ENCODE measurements at regions of chr5 and their contacts with region 1.

Region 1: GRCh38 chr5:43389679-43390329 is 22.4 kb downstream of the CCL28 start:
- DNase-seq: peak; percentile 40
- ATAC-seq: peak; percentile 88
- H3K4me3 ChIP-seq: no peak overlapping the region
- H3K27ac ChIP-seq: no peak overlapping the region
- H3K4me1 ChIP-seq: peaks cover 8% of the 10 kb centered on the region
- H3K27me3 ChIP-seq: no peaks in the 10 kb centered on the region
- CTCF ChIP-seq: peak; percentile 71 to 86 (median 84); a peak in 5 of 6 replicates
- EP300 ChIP-seq: no peak
- POLR2A ChIP-seq: no peak
- RAD21 ChIP-seq: peak; percentile 71

Region 2: DNA sequence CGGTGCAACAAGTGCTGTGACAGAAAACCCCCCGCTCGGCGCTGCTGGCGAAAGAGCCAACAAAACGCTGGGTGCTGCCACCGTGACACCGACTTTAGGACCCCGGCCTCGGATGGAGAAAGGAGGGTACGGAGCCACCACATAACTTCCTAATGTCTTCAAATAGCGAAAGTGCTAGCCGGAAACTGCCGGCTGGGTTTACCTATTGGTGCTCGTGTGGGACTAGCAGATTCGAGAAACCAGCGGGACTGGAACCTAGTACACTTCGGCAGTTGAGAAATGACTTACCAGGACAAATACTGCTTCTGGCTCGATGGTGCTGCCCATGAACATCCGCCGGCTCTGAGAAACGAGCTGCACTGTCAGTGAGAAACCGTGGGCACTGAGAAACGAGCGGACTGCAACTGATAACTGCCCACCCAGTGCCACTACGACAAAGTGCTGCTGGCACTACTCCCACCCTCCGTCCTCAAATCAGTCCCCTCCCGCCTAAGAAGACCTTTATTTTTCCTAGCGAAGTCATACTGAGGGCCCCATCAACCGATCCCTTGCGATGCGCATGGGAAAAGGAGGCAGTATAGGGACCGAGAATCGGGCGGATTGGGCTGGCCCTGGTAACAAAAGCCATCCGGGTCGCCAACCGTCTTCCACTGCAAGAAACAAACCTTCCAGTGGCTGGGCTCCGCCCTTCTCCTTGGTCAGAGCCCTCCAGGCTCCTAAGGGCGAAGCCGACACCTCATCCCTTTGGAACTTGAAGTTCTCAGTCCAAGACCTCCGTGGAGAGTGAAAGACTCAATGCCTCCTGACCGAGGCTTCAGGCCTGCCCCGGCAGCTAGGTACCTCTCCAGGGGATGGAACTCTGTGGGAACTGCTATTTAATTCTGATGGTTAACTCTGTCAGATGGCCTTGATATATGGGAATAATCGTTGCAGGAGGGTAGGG is 322.7 kb before region 1 on chr5:
- CTCF ChIA-PET with region 1: interaction called, 13 read pairs
- POLR2A ChIA-PET with region 1: no interaction called
- RAD21 ChIA-PET with region 1: no interaction called
- SMC1A ChIA-PET with region 1: no interaction called
- in situ Hi-C with region 1: loop called (anchors 10 kb)
- intact Hi-C with region 1: loop called (anchors 10 kb)
- DNase-seq: peak; percentile 74
- ATAC-seq: peak; percentile 58
- H3K4me3 ChIP-seq: peak overlapping the region; percentile 91
- H3K27ac ChIP-seq: peak overlapping the region; percentile 100
- H3K4me1 ChIP-seq: peaks cover 10% of the 10 kb centered on the region
- H3K27me3 ChIP-seq: no peaks in the 10 kb centered on the region
- CTCF ChIP-seq: no peak
- EP300 ChIP-seq: peak in 1 of 2 experiments; percentile 100; a peak in 2 of 4 replicates
- POLR2A ChIP-seq: peak; percentile 47; the same call in 1 of the 2 replicates
- RAD21 ChIP-seq: no peak

Region 3: DNA sequence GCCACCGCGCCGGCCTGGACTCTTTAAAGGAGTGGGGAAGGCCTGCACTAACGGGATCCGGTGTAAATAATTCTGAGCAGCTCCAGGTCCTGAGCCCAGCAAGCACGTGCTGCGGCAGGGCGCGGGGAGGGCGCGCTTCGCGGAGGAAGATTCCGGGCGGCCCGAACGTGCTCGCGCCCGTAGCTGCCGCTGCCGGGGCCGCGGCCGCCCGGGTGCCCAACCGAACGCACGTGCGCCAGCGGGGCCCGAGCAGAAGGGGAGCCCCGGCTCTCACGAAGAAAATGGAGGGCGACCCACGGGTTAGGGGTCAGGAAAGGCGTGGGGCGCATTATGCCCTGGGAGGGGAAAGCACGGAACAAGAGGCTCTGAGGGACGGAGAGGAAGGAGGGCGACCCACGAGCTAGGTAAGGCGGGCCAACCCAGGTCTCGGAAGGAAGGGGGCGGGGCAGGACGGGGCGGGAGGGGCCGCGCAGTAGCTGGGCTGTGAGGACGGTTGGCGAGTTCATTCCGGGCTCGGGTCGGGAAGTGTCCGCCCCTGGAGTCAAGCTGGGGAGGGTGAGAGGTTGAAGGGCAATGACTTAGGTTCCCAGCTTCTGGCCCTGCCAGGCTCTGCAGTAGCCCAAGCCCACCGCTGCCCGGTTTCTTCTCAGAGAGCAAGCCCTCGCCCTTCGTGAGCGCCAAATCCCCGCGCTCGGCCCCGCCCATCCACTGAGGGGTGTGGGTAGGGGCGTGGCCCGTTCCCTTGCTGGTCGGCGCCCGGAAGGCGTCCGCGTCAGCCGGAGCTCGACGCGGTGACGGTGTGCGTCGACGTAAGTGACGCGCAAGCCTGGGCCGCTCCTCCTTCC is 268.9 kb before region 1 on chr5 and contains the start of gene ZNF131:
- CTCF ChIA-PET with region 1: interaction called, 7 read pairs
- POLR2A ChIA-PET with region 1: no interaction called
- RAD21 ChIA-PET with region 1: interaction called, 13 read pairs
- SMC1A ChIA-PET with region 1: interaction called, 4 read pairs
- in situ Hi-C with region 1: no loop called
- intact Hi-C with region 1: no loop called
- DNase-seq: peak; percentile 87
- ATAC-seq: peak; percentile 93
- H3K4me3 ChIP-seq: peak within 1 kb of the TSS; percentile 96
- H3K27ac ChIP-seq: peak within 1 kb of the TSS; percentile 94
- H3K4me1 ChIP-seq: peaks cover 10% of the 10 kb centered on the region
- H3K27me3 ChIP-seq: peaks cover 0 to 1% of the 10 kb centered on the region in 2 experiments; a peak in 1 of 4 replicates
- CTCF ChIP-seq: no peak
- EP300 ChIP-seq: peak in 1 of 2 experiments; percentile 25; a peak in 1 of 4 replicates
- POLR2A ChIP-seq: peak; percentile 87
- RAD21 ChIP-seq: no peak
- polyA plus RNA-seq, gene ZNF131: 16.4 to 23.3 TPM

Region 4: DNA sequence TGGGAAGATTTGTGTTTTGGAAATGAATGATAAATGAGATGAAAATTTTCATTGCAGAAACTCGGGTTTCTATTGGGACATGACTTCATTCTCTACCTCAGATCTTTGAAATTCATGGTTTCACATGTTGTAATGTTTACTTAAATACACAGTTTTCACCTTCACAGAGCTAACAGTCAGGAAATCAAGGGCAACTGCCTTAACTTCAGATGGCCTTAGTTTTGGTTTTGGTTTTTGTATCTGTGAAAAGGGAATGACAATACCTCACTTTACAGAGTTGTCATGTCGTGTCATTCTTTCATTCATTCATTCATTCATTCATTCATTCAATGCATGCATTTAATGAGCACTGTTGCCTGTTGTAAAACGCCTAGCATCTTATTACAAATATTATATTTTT is 155.9 kb before region 1 on chr5:
- CTCF ChIA-PET with region 1: interaction called, 52 read pairs
- POLR2A ChIA-PET with region 1: interaction called, 5 read pairs
- RAD21 ChIA-PET with region 1: interaction called, 9 read pairs
- SMC1A ChIA-PET with region 1: interaction called, 32 read pairs
- in situ Hi-C with region 1: loop called (anchors 5 kb)
- intact Hi-C with region 1: no loop called
- DNase-seq: no peak
- ATAC-seq: peak; percentile 79
- H3K4me3 ChIP-seq: no peak overlapping the region
- H3K27ac ChIP-seq: no peak overlapping the region
- H3K4me1 ChIP-seq: peaks cover 8% of the 10 kb centered on the region; the same call in 1 of the 2 replicates
- H3K27me3 ChIP-seq: no peaks in the 10 kb centered on the region
- CTCF ChIP-seq: no peak
- EP300 ChIP-seq: no peak
- POLR2A ChIP-seq: no peak
- RAD21 ChIP-seq: no peak

Region 5: DNA sequence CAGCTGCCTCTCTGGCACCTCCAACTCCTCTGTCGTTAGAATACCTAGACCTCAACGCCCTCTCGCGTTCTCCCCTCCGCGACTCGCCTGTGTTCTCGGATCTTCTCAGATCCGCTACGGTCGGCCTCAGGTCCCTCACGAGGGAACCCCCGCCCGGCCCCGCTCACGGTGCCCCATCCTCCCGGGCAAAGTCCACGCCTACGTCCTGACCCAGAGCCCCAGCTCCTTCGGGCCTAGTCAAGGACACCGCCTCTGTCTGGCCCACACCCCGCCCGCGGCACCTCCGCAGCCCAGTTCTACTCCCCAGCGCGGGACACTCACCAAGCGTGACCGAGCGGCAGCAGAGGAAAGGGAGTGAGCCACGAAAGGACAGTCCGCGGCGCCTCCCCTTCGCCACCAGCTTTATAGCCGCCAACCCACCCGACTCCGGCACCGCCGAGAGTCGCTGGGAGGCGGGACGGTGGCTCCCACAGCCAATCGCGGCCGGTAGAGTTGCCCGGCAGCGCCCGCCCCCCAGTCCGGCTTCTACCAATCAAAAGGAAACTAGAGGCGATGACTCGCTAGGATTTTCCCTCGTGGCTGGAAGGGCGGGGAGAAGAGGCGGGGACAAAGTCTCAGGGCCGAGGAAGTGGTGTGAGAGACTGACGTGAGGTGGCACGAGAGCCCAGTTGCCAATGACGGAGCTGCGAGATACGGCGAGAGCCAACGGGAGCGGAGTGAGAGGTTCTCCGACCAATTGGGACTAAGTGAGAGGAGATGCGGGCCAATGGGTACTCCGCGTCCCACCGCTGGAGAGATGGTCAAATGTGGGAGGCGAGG is 76.6 kb before region 1 on chr5 and contains the start of gene HMGCS1:
- CTCF ChIA-PET with region 1: interaction called, 34 read pairs
- POLR2A ChIA-PET with region 1: interaction called, 4 read pairs
- RAD21 ChIA-PET with region 1: interaction called, 14 read pairs
- SMC1A ChIA-PET with region 1: interaction called, 20 read pairs
- in situ Hi-C with region 1: no loop called
- intact Hi-C with region 1: no loop called
- DNase-seq: peak; percentile 100
- ATAC-seq: peak; percentile 92
- H3K4me3 ChIP-seq: peak within 1 kb of the TSS; percentile 79
- H3K27ac ChIP-seq: peak within 1 kb of the TSS; percentile 84
- H3K4me1 ChIP-seq: peaks cover 6% of the 10 kb centered on the region
- H3K27me3 ChIP-seq: no peaks in the 10 kb centered on the region
- CTCF ChIP-seq: peak in 2 of 3 experiments; percentile 6 to 16; a peak in 1 of 6 replicates
- EP300 ChIP-seq: peak in 1 of 2 experiments; percentile 60; a peak in 1 of 4 replicates
- POLR2A ChIP-seq: peak; percentile 99
- RAD21 ChIP-seq: peak; percentile 23; the same call in 1 of the 2 replicates
- polyA plus RNA-seq, gene HMGCS1: 74.9 to 94.1 TPM

Region 6: GRCh38 chr5:43484106-43484849 is 94.5 kb after region 1 on chr5:
- CTCF ChIA-PET with region 1: interaction called, 19 read pairs
- POLR2A ChIA-PET with region 1: interaction called, 6 read pairs
- RAD21 ChIA-PET with region 1: interaction called, 13 read pairs
- SMC1A ChIA-PET with region 1: interaction called, 18 read pairs
- in situ Hi-C with region 1: no loop called
- intact Hi-C with region 1: no loop called
- DNase-seq: peak; percentile 60
- ATAC-seq: peak; percentile 82
- H3K4me3 ChIP-seq: peak overlapping the region; percentile 80
- H3K27ac ChIP-seq: peak overlapping the region; percentile 100
- H3K4me1 ChIP-seq: peaks cover 3% of the 10 kb centered on the region
- H3K27me3 ChIP-seq: no peaks in the 10 kb centered on the region
- CTCF ChIP-seq: peak; percentile 56 to 82 (median 69)
- EP300 ChIP-seq: 0 out of 4 replicates have a peak, but pooled peaks of 1 of the 2 experiments have one; percentile 7
- POLR2A ChIP-seq: peak; percentile 61
- RAD21 ChIP-seq: peak; percentile 58

Region 7: GRCh38 chr5:43711176-43711895 is 321.5 kb after region 1 on chr5:
- CTCF ChIA-PET with region 1: no interaction called
- POLR2A ChIA-PET with region 1: no interaction called
- RAD21 ChIA-PET with region 1: no interaction called
- SMC1A ChIA-PET with region 1: no interaction called
- in situ Hi-C with region 1: no loop called
- intact Hi-C with region 1: no loop called
- DNase-seq: no peak
- ATAC-seq: no peak
- H3K4me3 ChIP-seq: no peak overlapping the region
- H3K27ac ChIP-seq: no peak overlapping the region
- H3K4me1 ChIP-seq: no peaks in the 10 kb centered on the region
- H3K27me3 ChIP-seq: no peaks in the 10 kb centered on the region
- CTCF ChIP-seq: no peak
- EP300 ChIP-seq: no peak
- POLR2A ChIP-seq: no peak
- RAD21 ChIP-seq: no peak